IMR-90 (cell line): ENCODE measurements at regions of chr7 and their contacts with region 1.

Region 1: GRCh38 chr7:121126801-121127534 is 138.5 kb downstream of the CPED1 start:
- DNase-seq: peak; percentile 27
- ATAC-seq: no peak
- H3K4me3 ChIP-seq: no peak overlapping the region
- H3K27ac ChIP-seq: no peak overlapping the region
- H3K4me1 ChIP-seq: no peaks in the 10 kb centered on the region
- H3K27me3 ChIP-seq: no peaks in the 10 kb centered on the region
- CTCF ChIP-seq: 0 out of 2 replicates have a peak, but pooled peaks have one; percentile 33
- POLR2A ChIP-seq: no peak
- RAD21 ChIP-seq: peak; percentile 42

Region 2: GRCh38 chr7:121337398-121337797 is 210.4 kb after region 1 on chr7:
- CTCF ChIA-PET with region 1: no interaction called
- POLR2A ChIA-PET with region 1: no interaction called
- dilution Hi-C with region 1: no loop called
- in situ Hi-C with region 1: loop called (anchors 25 kb)
- intact Hi-C with region 1: loop called (anchors 5 kb)
- DNase-seq: no peak
- ATAC-seq: peak; percentile 56
- H3K4me3 ChIP-seq: no peak overlapping the region
- H3K27ac ChIP-seq: no peak overlapping the region
- H3K4me1 ChIP-seq: peaks cover 5% of the 10 kb centered on the region
- H3K27me3 ChIP-seq: no peaks in the 10 kb centered on the region
- CTCF ChIP-seq: peak; percentile 46
- POLR2A ChIP-seq: no peak
- RAD21 ChIP-seq: peak; percentile 50